PC-9 (cell line): ENCODE measurements at regions of chr9 and their contacts with region 1.

Region 1: DNA sequence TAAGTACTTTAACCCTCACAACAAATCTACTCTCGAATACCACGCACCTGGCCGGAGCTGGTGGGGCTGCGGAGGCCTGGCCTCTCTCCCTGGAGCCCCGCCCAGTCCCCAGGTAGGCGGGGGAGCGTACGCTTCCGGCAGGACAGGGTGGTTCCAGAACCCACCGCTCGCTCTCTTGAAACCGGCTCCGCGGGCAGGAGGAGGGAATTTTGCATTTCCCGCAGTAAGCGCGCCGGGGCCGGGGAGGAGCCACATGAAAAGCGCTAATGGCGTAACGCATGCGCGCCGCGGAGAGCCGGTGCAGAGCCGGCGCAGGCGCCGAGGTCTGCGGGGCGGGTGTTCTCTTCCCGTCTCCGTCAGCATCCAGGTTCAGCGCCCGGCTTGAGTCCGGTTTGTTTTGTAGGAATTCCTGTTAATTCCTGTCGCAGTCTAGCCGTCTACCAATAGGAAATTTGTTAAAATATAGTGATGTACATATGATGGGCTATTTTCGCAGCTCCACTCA is 20.8 kb downstream of the CAVIN4 start:
- DNase-seq: peak; percentile 76 to 94
- H3K4me3 ChIP-seq: peak overlapping the region; percentile 66
- H3K27ac ChIP-seq: 0 out of 2 replicates have a peak overlapping the region, but pooled peaks have one; percentile 17
- H3K4me1 ChIP-seq: peaks cover 12% of the 10 kb centered on the region
- H3K27me3 ChIP-seq: no peaks in the 10 kb centered on the region
- CTCF ChIP-seq: no peak

Region 2: GRCh38 chr9:99807276-99807852 is 791.3 kb before region 1 on chr9:
- CTCF ChIA-PET with region 1: no interaction called
- POLR2A ChIA-PET with region 1: no interaction called
- intact Hi-C with region 1: loop called (anchors 5 kb)
- DNase-seq: peak; percentile 65 to 73
- H3K4me3 ChIP-seq: no peak overlapping the region
- H3K27ac ChIP-seq: no peak overlapping the region
- H3K4me1 ChIP-seq: peaks cover 15% of the 10 kb centered on the region
- H3K27me3 ChIP-seq: no peaks in the 10 kb centered on the region
- CTCF ChIP-seq: peak; percentile 87

Region 3: DNA sequence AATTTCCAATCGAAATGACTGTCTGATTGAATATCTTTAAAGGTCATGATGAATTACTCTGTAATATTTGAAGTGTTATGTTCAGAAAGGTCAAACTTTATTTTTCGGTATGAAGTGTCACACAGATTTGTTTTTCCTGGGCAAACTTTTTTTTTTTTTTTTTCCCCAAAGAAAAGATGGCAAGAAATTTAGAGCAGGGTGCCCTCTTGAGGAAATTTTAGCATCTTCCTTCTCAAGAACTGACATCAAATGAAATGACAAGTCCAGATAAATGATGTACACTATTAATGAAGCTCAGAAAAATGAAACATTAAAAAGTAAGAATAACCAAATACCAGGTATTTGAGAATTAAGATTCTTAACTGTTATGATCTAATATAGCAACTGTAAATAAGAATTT is 376.0 kb before region 1 on chr9:
- CTCF ChIA-PET with region 1: no interaction called
- POLR2A ChIA-PET with region 1: no interaction called
- intact Hi-C with region 1: loop called (anchors 10 kb)
- DNase-seq: no peak
- H3K4me3 ChIP-seq: no peak overlapping the region
- H3K27ac ChIP-seq: no peak overlapping the region
- H3K4me1 ChIP-seq: no peaks in the 10 kb centered on the region
- H3K27me3 ChIP-seq: no peaks in the 10 kb centered on the region
- CTCF ChIP-seq: peak; percentile 55

Region 4: DNA sequence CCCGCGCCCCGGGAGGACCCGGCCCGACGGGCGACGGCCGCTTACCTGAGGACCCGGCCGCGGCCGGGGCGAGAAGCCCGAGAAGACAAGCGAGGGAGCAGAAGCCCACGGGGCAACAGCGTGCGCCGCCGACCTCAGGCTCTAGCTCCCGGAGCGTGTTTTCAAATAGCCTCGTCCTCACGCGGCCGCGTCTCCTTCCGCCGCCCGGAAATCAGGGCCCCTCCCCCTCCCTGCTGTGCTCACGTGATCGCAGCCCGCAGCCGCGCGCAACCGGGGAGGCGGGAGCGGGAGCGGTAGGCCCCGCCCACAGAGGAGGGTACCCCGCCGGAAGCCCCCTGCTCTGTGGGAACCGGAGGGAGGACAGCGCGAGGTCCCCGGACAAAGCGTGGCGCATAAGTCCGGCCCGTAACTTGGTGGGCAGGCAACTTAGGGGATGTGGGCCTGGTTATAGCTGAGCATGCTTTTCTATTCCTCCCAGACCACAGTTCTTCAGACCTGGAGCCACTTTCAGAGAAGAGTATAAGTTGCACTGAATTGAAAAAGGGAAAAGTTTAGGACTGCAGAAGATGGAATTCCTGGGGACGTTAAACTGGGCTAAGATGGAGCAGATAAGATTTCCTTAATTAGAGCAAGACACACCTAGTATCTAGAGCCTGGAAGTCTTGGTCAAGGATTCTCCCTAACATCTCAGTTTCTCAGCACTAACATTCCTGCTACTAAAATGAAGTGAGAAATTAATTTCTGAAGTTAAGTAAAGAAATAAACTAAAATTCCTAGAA is 245.8 kb before region 1 on chr9 and contains the start of gene TEX10:
- CTCF ChIA-PET with region 1: no interaction called
- POLR2A ChIA-PET with region 1: interaction called, 3 read pairs
- intact Hi-C with region 1: loop called (anchors 5 kb)
- DNase-seq: peak; percentile 61 to 90
- H3K4me3 ChIP-seq: peak within 1 kb of the TSS; percentile 90
- H3K27ac ChIP-seq: peak within 1 kb of the TSS; percentile 65
- H3K4me1 ChIP-seq: peaks cover 25% of the 10 kb centered on the region
- H3K27me3 ChIP-seq: no peaks in the 10 kb centered on the region
- CTCF ChIP-seq: no peak
- total RNA-seq, gene TEX10: 21.6 and 29.0 TPM in 2 replicates

Region 5: GRCh38 chr9:100472788-100473275 is 125.9 kb before region 1 on chr9 and contains the start of gene TMEFF1:
- CTCF ChIA-PET with region 1: interaction called, 18 read pairs
- POLR2A ChIA-PET with region 1: interaction called, 10 read pairs
- intact Hi-C with region 1: no loop called
- DNase-seq: peak in 1 of 2 experiments; percentile 40
- H3K4me3 ChIP-seq: peak within 1 kb of the TSS; percentile 61
- H3K27ac ChIP-seq: no peak within 1 kb of the TSS
- H3K4me1 ChIP-seq: no peaks in the 10 kb centered on the region
- H3K27me3 ChIP-seq: no peaks in the 10 kb centered on the region
- CTCF ChIP-seq: no peak
- total RNA-seq, gene TMEFF1: 1.1 and 1.7 TPM in 2 replicates

Region 6: GRCh38 chr9:100561256-100561655 is 37.4 kb before region 1 on chr9:
- CTCF ChIA-PET with region 1: no interaction called
- POLR2A ChIA-PET with region 1: no interaction called
- intact Hi-C with region 1: no loop called
- DNase-seq: no peak
- H3K4me3 ChIP-seq: no peak overlapping the region
- H3K27ac ChIP-seq: no peak overlapping the region
- H3K4me1 ChIP-seq: no peaks in the 10 kb centered on the region
- H3K27me3 ChIP-seq: no peaks in the 10 kb centered on the region
- CTCF ChIP-seq: no peak

Region 7: GRCh38 chr9:101235105-101235866 is 636.6 kb after region 1 on chr9:
- CTCF ChIA-PET with region 1: interaction called, 4 read pairs
- POLR2A ChIA-PET with region 1: no interaction called
- intact Hi-C with region 1: loop called (anchors 1 kb)
- DNase-seq: no peak
- H3K4me3 ChIP-seq: no peak overlapping the region
- H3K27ac ChIP-seq: no peak overlapping the region
- H3K4me1 ChIP-seq: no peaks in the 10 kb centered on the region
- H3K27me3 ChIP-seq: no peaks in the 10 kb centered on the region
- CTCF ChIP-seq: peak; percentile 64